H1 (cell line): ENCODE measurements at regions of chr7 and their contacts with region 1.

Region 1: GRCh38 chr7:90540406-90540805 is 55.7 kb upstream of the CDK14 start:
- DNase-seq: no peak
- H3K4me3 ChIP-seq: no peak overlapping the region
- H3K27ac ChIP-seq: no peak overlapping the region
- H3K4me1 ChIP-seq: no peaks in the 10 kb centered on the region
- H3K27me3 ChIP-seq: no peaks in the 10 kb centered on the region
- CTCF ChIP-seq: no peak
- EP300 ChIP-seq: no peak
- POLR2A ChIP-seq: no peak
- RAD21 ChIP-seq: no peak

Region 2: GRCh38 chr7:90520484-90520883 is 19.9 kb before region 1 on chr7:
- CTCF ChIA-PET with region 1: interaction called, 12 read pairs
- POLR2A ChIA-PET with region 1: no interaction called
- DNase-seq: no peak
- H3K4me3 ChIP-seq: no peak overlapping the region
- H3K27ac ChIP-seq: no peak overlapping the region
- H3K4me1 ChIP-seq: peaks cover 0 to 3% (median 0%) of the 10 kb centered on the region in 4 experiments; a peak in 1 of 7 replicates
- H3K27me3 ChIP-seq: no peaks in the 10 kb centered on the region
- CTCF ChIP-seq: peak in 2 of 3 experiments; percentile 32 to 60; a peak in 2 of 4 replicates
- EP300 ChIP-seq: no peak
- POLR2A ChIP-seq: no peak
- RAD21 ChIP-seq: 0 out of 4 replicates have a peak, but pooled peaks of 1 of the 2 experiments have one; percentile 11

Region 3: DNA sequence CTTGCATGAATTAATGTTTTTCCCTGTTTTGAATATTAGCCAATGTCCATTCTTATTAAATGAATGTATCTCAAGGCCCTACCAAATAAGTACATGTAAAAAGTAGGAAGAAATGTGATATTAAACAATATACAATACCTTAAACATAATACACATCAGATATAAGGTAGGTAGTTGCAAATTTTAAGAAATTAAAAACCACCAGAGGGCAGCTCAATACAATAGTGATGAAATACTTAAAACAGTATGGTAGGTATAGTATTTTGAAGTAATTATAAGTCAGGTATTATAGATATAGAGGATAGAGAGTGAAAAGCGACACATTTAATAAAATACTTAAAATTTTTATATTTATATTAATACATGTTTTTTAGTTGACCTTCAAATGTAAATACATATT is 12.1 kb after region 1 on chr7:
- CTCF ChIA-PET with region 1: interaction called, 17 read pairs
- POLR2A ChIA-PET with region 1: no interaction called
- DNase-seq: no peak
- H3K4me3 ChIP-seq: no peak overlapping the region
- H3K27ac ChIP-seq: no peak overlapping the region
- H3K4me1 ChIP-seq: peaks cover 0 to 6% (median 0%) of the 10 kb centered on the region in 4 experiments; a peak in 3 of 7 replicates
- H3K27me3 ChIP-seq: no peaks in the 10 kb centered on the region
- CTCF ChIP-seq: no peak
- EP300 ChIP-seq: no peak
- POLR2A ChIP-seq: no peak
- RAD21 ChIP-seq: no peak; a peak in 1 of 4 replicates